IMR-90 (cell line): ENCODE measurements at regions of chr18 and their contacts with region 1.

Region 1: GRCh38 chr18:499551-500408 is 721 bp downstream of the COLEC12 start:
- DNase-seq: peak; percentile 85
- ATAC-seq: peak; percentile 60
- H3K4me3 ChIP-seq: peak overlapping the region; percentile 35
- H3K27ac ChIP-seq: no peak overlapping the region
- H3K4me1 ChIP-seq: peaks cover 5% of the 10 kb centered on the region; the same call in 1 of the 2 replicates
- H3K27me3 ChIP-seq: peaks cover 37% of the 10 kb centered on the region
- CTCF ChIP-seq: no peak
- POLR2A ChIP-seq: no peak
- RAD21 ChIP-seq: no peak

Region 2: DNA sequence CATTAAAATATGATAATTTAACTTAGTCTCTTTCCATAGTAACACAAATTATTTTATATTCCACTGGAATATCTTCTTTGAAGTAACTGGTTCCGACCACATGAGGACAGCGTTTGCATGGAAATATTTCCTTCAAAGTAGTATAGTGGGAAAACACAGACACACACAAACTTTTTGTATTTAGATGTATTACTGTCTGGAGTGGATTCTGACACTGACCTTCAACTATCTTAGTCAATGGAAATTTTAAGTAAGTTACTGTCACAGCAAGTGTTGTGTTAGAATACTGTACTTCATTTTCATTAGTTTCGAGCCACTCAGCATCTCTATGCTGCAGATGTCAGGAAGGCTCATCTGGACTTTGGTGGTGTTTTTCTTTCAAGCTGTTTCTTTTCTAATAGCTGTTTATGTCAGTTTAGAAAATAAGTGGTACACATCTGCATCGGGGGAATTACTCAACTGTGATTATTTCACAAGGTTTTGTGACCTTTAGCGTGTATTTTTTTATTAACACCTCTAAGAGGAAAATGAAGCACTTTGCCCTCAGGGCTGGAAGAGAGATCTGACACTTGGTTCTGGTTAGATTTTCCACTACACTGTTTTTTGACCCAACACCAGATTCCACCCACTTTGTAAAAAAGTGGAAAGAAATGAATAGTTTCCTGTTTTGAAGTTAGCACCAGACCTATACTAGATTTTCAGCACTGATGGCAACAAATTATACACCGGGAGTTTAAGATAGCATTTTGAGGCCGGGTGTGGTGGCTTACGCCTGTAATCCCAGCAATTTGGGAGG is 213.1 kb before region 1 on chr18:
- CTCF ChIA-PET with region 1: no interaction called
- POLR2A ChIA-PET with region 1: no interaction called
- dilution Hi-C with region 1: no loop called
- in situ Hi-C with region 1: no loop called
- intact Hi-C with region 1: loop called (anchors 5 kb)
- DNase-seq: peak; percentile 42
- ATAC-seq: peak; percentile 70
- H3K4me3 ChIP-seq: no peak overlapping the region
- H3K27ac ChIP-seq: no peak overlapping the region
- H3K4me1 ChIP-seq: no peaks in the 10 kb centered on the region
- H3K27me3 ChIP-seq: peaks cover 8% of the 10 kb centered on the region
- CTCF ChIP-seq: peak; percentile 85
- POLR2A ChIP-seq: peak; percentile 33; the same call in 1 of the 2 replicates
- RAD21 ChIP-seq: peak; percentile 91

Region 3: DNA sequence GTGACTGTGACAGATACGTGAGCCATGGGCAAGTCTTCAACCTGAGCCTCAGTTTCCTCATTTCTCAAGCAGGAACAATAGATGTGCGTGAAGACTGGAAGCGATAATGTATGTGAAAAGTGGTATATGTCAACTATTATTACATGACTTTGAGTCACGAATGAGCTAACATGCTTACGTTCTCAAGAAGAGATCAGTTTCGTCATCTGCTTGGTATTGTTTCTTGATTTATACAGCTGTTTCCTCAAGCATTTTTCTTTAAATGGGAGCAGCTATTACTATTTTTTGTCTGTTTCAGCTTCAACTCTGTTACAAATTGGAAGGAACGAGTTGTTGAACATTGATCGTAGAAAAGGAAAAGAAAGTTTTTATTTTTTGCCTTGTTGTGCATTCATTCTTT is 183.4 kb before region 1 on chr18:
- CTCF ChIA-PET with region 1: no interaction called
- POLR2A ChIA-PET with region 1: no interaction called
- dilution Hi-C with region 1: no loop called
- in situ Hi-C with region 1: no loop called
- intact Hi-C with region 1: loop called (anchors 5 kb)
- DNase-seq: peak; percentile 70
- ATAC-seq: no peak
- H3K4me3 ChIP-seq: no peak overlapping the region
- H3K27ac ChIP-seq: no peak overlapping the region
- H3K4me1 ChIP-seq: no peaks in the 10 kb centered on the region
- H3K27me3 ChIP-seq: peaks cover 47% of the 10 kb centered on the region
- CTCF ChIP-seq: no peak
- POLR2A ChIP-seq: no peak
- RAD21 ChIP-seq: no peak

Region 4: DNA sequence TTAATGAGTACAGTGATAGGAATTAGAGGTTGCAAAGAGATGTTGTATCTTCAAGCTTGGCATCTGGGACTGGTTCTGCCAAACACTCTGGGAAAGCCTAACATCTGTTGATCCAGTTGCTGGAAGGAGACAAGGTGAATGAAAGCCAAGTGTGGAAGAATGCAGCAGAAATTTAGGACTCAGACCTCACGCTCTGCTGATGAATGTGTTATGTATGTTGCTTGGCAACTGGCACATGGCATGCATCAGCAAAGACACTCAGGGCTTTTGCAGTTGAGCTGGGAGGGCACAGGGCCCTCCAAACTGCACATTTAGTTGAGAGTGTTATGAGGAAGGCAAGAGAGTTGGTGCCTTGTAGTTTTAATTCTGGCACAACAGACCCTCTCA is 104.8 kb before region 1 on chr18:
- CTCF ChIA-PET with region 1: no interaction called
- POLR2A ChIA-PET with region 1: no interaction called
- dilution Hi-C with region 1: no loop called
- in situ Hi-C with region 1: no loop called
- intact Hi-C with region 1: loop called (anchors 5 kb)
- DNase-seq: peak; percentile 75
- ATAC-seq: peak; percentile 50
- H3K4me3 ChIP-seq: no peak overlapping the region
- H3K27ac ChIP-seq: peak overlapping the region; percentile 61; the same call in 1 of the 2 replicates
- H3K4me1 ChIP-seq: peaks cover 25% of the 10 kb centered on the region
- H3K27me3 ChIP-seq: 0 out of 2 replicates have a peak, but pooled peaks cover 1% of the 10 kb centered on the region
- CTCF ChIP-seq: no peak
- POLR2A ChIP-seq: no peak
- RAD21 ChIP-seq: no peak

Region 5: GRCh38 chr18:543447-544078 is 43.8 kb after region 1 on chr18:
- CTCF ChIA-PET with region 1: no interaction called
- POLR2A ChIA-PET with region 1: no interaction called
- dilution Hi-C with region 1: no loop called
- in situ Hi-C with region 1: no loop called
- intact Hi-C with region 1: no loop called
- DNase-seq: no peak
- ATAC-seq: no peak; the same call in 1 of the 2 replicates
- H3K4me3 ChIP-seq: no peak overlapping the region
- H3K27ac ChIP-seq: no peak overlapping the region
- H3K4me1 ChIP-seq: no peaks in the 10 kb centered on the region
- H3K27me3 ChIP-seq: peaks cover 16% of the 10 kb centered on the region
- CTCF ChIP-seq: no peak
- POLR2A ChIP-seq: no peak
- RAD21 ChIP-seq: no peak